Caco-2 (cell line): ENCODE measurements at regions of chr14 and their contacts with region 1.

Region 1: GRCh38 chr14:20855652-20856291 is 35.4 kb upstream of the RNASE3 start:
- DNase-seq: peak; percentile 77 to 80
- H3K4me3 ChIP-seq: no peak overlapping the region
- H3K4me3 Mint-ChIP-seq: no peak overlapping the region
- H3K27ac Mint-ChIP-seq: no peak overlapping the region
- H3K4me1 ChIP-seq: peaks cover 6% of the 10 kb centered on the region
- H3K4me1 Mint-ChIP-seq: peaks cover 20% of the 10 kb centered on the region
- H3K27me3 ChIP-seq: no peaks in the 10 kb centered on the region
- H3K27me3 Mint-ChIP-seq: no peaks in the 10 kb centered on the region
- CTCF ChIP-seq: peak; percentile 73 to 76

Region 2: GRCh38 chr14:20697273-20698017 is 158.3 kb before region 1 on chr14:
- CTCF ChIA-PET with region 1: interaction called, 7 read pairs
- POLR2A ChIA-PET with region 1: no interaction called
- intact Hi-C with region 1: loop called (anchors 1 kb)
- DNase-seq: peak; percentile 61 to 77
- H3K4me3 ChIP-seq: no peak overlapping the region
- H3K4me3 Mint-ChIP-seq: no peak overlapping the region
- H3K27ac Mint-ChIP-seq: no peak overlapping the region
- H3K4me1 ChIP-seq: no peaks in the 10 kb centered on the region
- H3K4me1 Mint-ChIP-seq: peaks cover 7% of the 10 kb centered on the region
- H3K27me3 ChIP-seq: no peaks in the 10 kb centered on the region
- H3K27me3 Mint-ChIP-seq: no peaks in the 10 kb centered on the region
- CTCF ChIP-seq: peak; percentile 69 to 77

Region 3: DNA sequence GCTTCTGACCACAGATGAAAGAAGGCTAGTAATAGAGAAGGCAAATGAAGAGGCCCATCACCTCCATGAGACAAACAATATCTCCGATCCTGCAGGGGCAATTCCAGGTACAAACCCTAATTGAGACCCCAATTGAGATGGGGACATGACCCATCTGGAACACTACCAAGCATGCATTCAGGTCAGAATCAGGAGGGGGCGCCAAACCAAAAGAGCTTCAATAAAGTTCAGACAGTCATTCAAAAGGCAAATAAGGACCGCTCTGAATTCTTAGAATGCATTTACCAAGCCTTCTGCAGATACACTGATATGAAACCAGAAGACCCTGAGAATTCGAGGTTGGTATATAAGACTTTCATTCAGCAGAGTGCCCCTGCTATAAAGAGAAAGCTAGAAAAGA is 97.8 kb before region 1 on chr14:
- CTCF ChIA-PET with region 1: interaction called, 5 read pairs
- POLR2A ChIA-PET with region 1: no interaction called
- intact Hi-C with region 1: loop called (anchors 1 kb)
- DNase-seq: peak in 1 of 2 experiments; percentile 18
- H3K4me3 ChIP-seq: no peak overlapping the region
- H3K4me3 Mint-ChIP-seq: no peak overlapping the region
- H3K27ac Mint-ChIP-seq: no peak overlapping the region
- H3K4me1 ChIP-seq: no peaks in the 10 kb centered on the region
- H3K4me1 Mint-ChIP-seq: no peaks in the 10 kb centered on the region
- H3K27me3 ChIP-seq: no peaks in the 10 kb centered on the region
- H3K27me3 Mint-ChIP-seq: no peaks in the 10 kb centered on the region
- CTCF ChIP-seq: peak in 1 of 2 experiments; percentile 25

Region 4: GRCh38 chr14:20818861-20819260 is 36.9 kb before region 1 on chr14:
- CTCF ChIA-PET with region 1: interaction called, 9 read pairs
- POLR2A ChIA-PET with region 1: no interaction called
- intact Hi-C with region 1: loop called (anchors 5 kb)
- DNase-seq: peak in 1 of 2 experiments; percentile 28
- H3K4me3 ChIP-seq: no peak overlapping the region
- H3K4me3 Mint-ChIP-seq: no peak overlapping the region
- H3K27ac Mint-ChIP-seq: no peak overlapping the region
- H3K4me1 ChIP-seq: peaks cover 4% of the 10 kb centered on the region; the same call in 1 of the 2 replicates
- H3K4me1 Mint-ChIP-seq: peaks cover 27% of the 10 kb centered on the region
- H3K27me3 ChIP-seq: no peaks in the 10 kb centered on the region
- H3K27me3 Mint-ChIP-seq: no peaks in the 10 kb centered on the region
- CTCF ChIP-seq: peak; percentile 10 to 37

Region 5: DNA sequence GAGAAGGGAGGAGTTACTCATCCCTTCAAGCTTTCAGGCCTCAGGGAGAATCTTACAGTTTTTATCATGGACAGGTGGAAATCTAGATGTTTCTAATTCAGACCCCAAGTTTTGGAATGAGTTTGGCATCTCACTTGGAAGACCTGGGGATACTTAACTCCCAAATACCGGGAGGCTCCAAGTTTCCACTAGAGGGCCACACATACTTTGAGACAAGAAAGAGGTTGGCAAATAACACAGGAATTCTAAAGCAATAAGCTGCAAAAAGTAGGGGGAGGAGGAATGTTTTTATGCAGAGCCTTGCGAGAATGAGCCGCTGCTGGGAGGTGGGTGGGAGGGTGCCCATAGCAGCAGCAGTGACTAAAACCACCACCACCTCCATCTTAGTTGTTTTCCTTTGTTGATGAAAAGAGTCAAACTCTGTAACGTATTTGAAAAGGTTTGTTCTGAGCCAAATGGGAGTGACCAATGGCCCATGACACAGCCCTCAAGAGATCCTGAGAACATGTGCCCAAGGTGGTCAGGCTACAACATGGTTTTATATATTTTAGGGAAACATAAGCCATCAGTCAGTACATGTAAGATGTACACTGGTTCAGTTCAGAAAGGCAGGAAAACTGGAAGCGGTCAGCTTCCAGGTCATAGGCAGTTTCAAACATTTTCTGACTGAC is 19.0 kb before region 1 on chr14:
- CTCF ChIA-PET with region 1: interaction called, 11 read pairs
- POLR2A ChIA-PET with region 1: no interaction called
- intact Hi-C with region 1: loop called (anchors 1 kb)
- DNase-seq: peak; percentile 48 to 56
- H3K4me3 ChIP-seq: no peak overlapping the region
- H3K4me3 Mint-ChIP-seq: no peak overlapping the region
- H3K27ac Mint-ChIP-seq: no peak overlapping the region
- H3K4me1 ChIP-seq: peaks cover 9% of the 10 kb centered on the region
- H3K4me1 Mint-ChIP-seq: peaks cover 6% of the 10 kb centered on the region
- H3K27me3 ChIP-seq: no peaks in the 10 kb centered on the region
- H3K27me3 Mint-ChIP-seq: no peaks in the 10 kb centered on the region
- CTCF ChIP-seq: peak; percentile 38 to 74

Region 6: GRCh38 chr14:20873370-20874177 is 17.8 kb after region 1 on chr14:
- CTCF ChIA-PET with region 1: interaction called, 6 read pairs
- POLR2A ChIA-PET with region 1: no interaction called
- intact Hi-C with region 1: loop called (anchors 2 kb)
- DNase-seq: peak; percentile 55 to 73
- H3K4me3 ChIP-seq: no peak overlapping the region
- H3K4me3 Mint-ChIP-seq: no peak overlapping the region
- H3K27ac Mint-ChIP-seq: no peak overlapping the region
- H3K4me1 ChIP-seq: no peaks in the 10 kb centered on the region
- H3K4me1 Mint-ChIP-seq: no peaks in the 10 kb centered on the region
- H3K27me3 ChIP-seq: no peaks in the 10 kb centered on the region; the same call in 1 of the 2 replicates
- H3K27me3 Mint-ChIP-seq: peaks cover 14% of the 10 kb centered on the region
- CTCF ChIP-seq: peak; percentile 71 to 77

Region 7: GRCh38 chr14:21039585-21040369 is 184.0 kb after region 1 on chr14:
- CTCF ChIA-PET with region 1: interaction called, 10 read pairs
- POLR2A ChIA-PET with region 1: no interaction called
- intact Hi-C with region 1: loop called (anchors 1 kb)
- DNase-seq: peak; percentile 54 to 68
- H3K4me3 ChIP-seq: no peak overlapping the region
- H3K4me3 Mint-ChIP-seq: no peak overlapping the region
- H3K27ac Mint-ChIP-seq: no peak overlapping the region
- H3K4me1 ChIP-seq: peaks cover 24% of the 10 kb centered on the region
- H3K4me1 Mint-ChIP-seq: peaks cover 21% of the 10 kb centered on the region
- H3K27me3 ChIP-seq: no peaks in the 10 kb centered on the region
- H3K27me3 Mint-ChIP-seq: peaks cover 10% of the 10 kb centered on the region
- CTCF ChIP-seq: peak; percentile 60 to 72

Region 8: DNA sequence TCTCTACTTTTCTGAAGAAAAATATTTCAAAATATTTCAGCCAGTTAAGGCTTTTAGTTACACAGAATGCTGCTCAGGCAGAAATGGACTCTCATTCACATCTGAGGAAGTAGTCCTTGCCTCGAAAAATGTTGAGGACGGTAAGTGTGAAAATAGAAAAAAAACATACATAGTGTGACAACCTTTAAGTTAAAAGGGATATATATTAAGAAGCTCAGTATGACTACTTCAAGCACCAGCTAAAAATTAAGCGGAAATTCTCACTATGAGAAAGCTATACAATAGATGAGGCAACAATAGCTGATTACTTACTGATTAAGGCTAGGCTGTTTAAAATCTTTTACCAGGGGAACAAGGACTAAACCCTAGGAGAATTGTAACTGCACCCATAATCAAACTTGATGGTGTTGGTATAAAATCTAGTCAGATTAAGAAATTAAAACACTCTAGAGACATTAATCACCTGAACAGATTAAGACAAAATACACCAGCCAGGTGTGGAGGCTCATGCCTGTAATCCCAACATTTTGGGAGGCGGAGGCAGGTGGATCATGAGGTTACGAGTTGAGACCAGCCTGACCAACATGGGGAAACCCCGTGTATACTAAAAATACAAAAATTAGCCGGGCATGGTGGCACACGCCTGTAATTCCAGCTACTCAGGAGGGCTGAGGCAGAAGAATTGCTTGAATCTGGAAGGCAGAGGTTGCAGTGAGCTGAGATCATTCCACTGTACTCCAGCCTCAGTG is 359.5 kb after region 1 on chr14:
- CTCF ChIA-PET with region 1: no interaction called
- POLR2A ChIA-PET with region 1: no interaction called
- intact Hi-C with region 1: no loop called
- DNase-seq: no peak
- H3K4me3 ChIP-seq: no peak overlapping the region
- H3K4me3 Mint-ChIP-seq: no peak overlapping the region
- H3K27ac Mint-ChIP-seq: no peak overlapping the region
- H3K4me1 ChIP-seq: 0 out of 2 replicates have a peak, but pooled peaks cover 4% of the 10 kb centered on the region
- H3K4me1 Mint-ChIP-seq: peaks cover 18% of the 10 kb centered on the region
- H3K27me3 ChIP-seq: no peaks in the 10 kb centered on the region
- H3K27me3 Mint-ChIP-seq: no peaks in the 10 kb centered on the region
- CTCF ChIP-seq: no peak